ENCODE measurements at regions of chr9 and their contacts with region 1.

Region 1: GRCh38 chr9:37415011-37415719 is 7.3 kb upstream of the GRHPR start:
- DNase-seq: peak; percentile 77 to 92
- H3K4me3 ChIP-seq: peak overlapping the region in 1 of 4 experiments; percentile 28; a peak in 1 of 8 replicates
- H3K27ac ChIP-seq: peak overlapping the region; percentile 41
- H3K4me1 ChIP-seq: peaks cover 0 to 18% (median 14%) of the 10 kb centered on the region in 4 experiments; a peak in 6 of 7 replicates
- H3K27me3 ChIP-seq: no peaks in the 10 kb centered on the region
- CTCF ChIP-seq: peak; percentile 61 to 78 (median 73)
- EP300 ChIP-seq: no peak
- POLR2A ChIP-seq: 0 out of 3 replicates have a peak, but pooled peaks of 1 of the 2 experiments have one; percentile 39
- RAD21 ChIP-seq: peak; percentile 46 to 58

Region 2: GRCh38 chr9:37371565-37372464 is 43.4 kb before region 1 on chr9:
- CTCF ChIA-PET with region 1: interaction called, 10 read pairs
- POLR2A ChIA-PET with region 1: interaction called, 3 read pairs
- DNase-seq: no peak
- H3K4me3 ChIP-seq: no peak overlapping the region
- H3K27ac ChIP-seq: no peak overlapping the region
- H3K4me1 ChIP-seq: 0 out of 7 replicates have a peak, but pooled peaks cover 0 to 2% (median 0%) of the 10 kb centered on the region in 4 experiments
- H3K27me3 ChIP-seq: no peaks in the 10 kb centered on the region
- CTCF ChIP-seq: no peak
- EP300 ChIP-seq: no peak
- POLR2A ChIP-seq: no peak
- RAD21 ChIP-seq: no peak

Region 3: GRCh38 chr9:37390759-37391158 is 24.4 kb before region 1 on chr9:
- CTCF ChIA-PET with region 1: interaction called, 28 read pairs
- POLR2A ChIA-PET with region 1: interaction called, 3 read pairs
- DNase-seq: peak; percentile 31 to 70
- H3K4me3 ChIP-seq: no peak overlapping the region
- H3K27ac ChIP-seq: no peak overlapping the region
- H3K4me1 ChIP-seq: no peaks in the 10 kb centered on the region; a peak in 1 of 7 replicates
- H3K27me3 ChIP-seq: no peaks in the 10 kb centered on the region
- CTCF ChIP-seq: peak; percentile 76 to 88 (median 79)
- EP300 ChIP-seq: no peak
- POLR2A ChIP-seq: no peak
- RAD21 ChIP-seq: peak; percentile 66 to 73

Region 4: GRCh38 chr9:37398464-37399025 is 16.6 kb before region 1 on chr9:
- CTCF ChIA-PET with region 1: interaction called, 28 read pairs
- POLR2A ChIA-PET with region 1: interaction called, 5 read pairs
- DNase-seq: no peak
- H3K4me3 ChIP-seq: no peak overlapping the region
- H3K27ac ChIP-seq: no peak overlapping the region
- H3K4me1 ChIP-seq: no peaks in the 10 kb centered on the region; a peak in 1 of 7 replicates
- H3K27me3 ChIP-seq: no peaks in the 10 kb centered on the region
- CTCF ChIP-seq: no peak
- EP300 ChIP-seq: no peak
- POLR2A ChIP-seq: no peak
- RAD21 ChIP-seq: no peak

Region 5: GRCh38 chr9:37430841-37431597 is 15.9 kb after region 1 on chr9:
- CTCF ChIA-PET with region 1: interaction called, 24 read pairs
- POLR2A ChIA-PET with region 1: interaction called, 7 read pairs
- DNase-seq: no peak
- H3K4me3 ChIP-seq: no peak overlapping the region
- H3K27ac ChIP-seq: no peak overlapping the region
- H3K4me1 ChIP-seq: peaks cover 3 to 16% (median 9%) of the 10 kb centered on the region in 4 experiments
- H3K27me3 ChIP-seq: no peaks in the 10 kb centered on the region
- CTCF ChIP-seq: peak in 2 of 3 experiments; percentile 12 to 31; a peak in 2 of 4 replicates
- EP300 ChIP-seq: no peak
- POLR2A ChIP-seq: no peak
- RAD21 ChIP-seq: peak in 1 of 2 experiments; percentile 19; a peak in 1 of 4 replicates

Region 6: GRCh38 chr9:37465249-37466036 is 50.3 kb after region 1 on chr9 and contains the start of gene ZBTB5:
- CTCF ChIA-PET with region 1: interaction called, 18 read pairs
- POLR2A ChIA-PET with region 1: interaction called, 11 read pairs
- DNase-seq: peak; percentile 96 to 98
- H3K4me3 ChIP-seq: peak within 1 kb of the TSS; percentile 69 to 94 (median 87)
- H3K27ac ChIP-seq: peak within 1 kb of the TSS; percentile 98
- H3K4me1 ChIP-seq: peaks cover 0 to 9% (median 4%) of the 10 kb centered on the region in 4 experiments; a peak in 2 of 7 replicates
- H3K27me3 ChIP-seq: no peaks in the 10 kb centered on the region
- CTCF ChIP-seq: no peak
- EP300 ChIP-seq: no peak
- POLR2A ChIP-seq: peak; percentile 52 to 62; a peak in 2 of 3 replicates
- RAD21 ChIP-seq: no peak
- total RNA-seq, gene ZBTB5: 13.6 and 14.5 TPM in 2 replicates

Region 7: GRCh38 chr9:37617832-37618231 is 202.7 kb after region 1 on chr9:
- CTCF ChIA-PET with region 1: no interaction called
- POLR2A ChIA-PET with region 1: no interaction called
- DNase-seq: no peak
- H3K4me3 ChIP-seq: no peak overlapping the region
- H3K27ac ChIP-seq: no peak overlapping the region
- H3K4me1 ChIP-seq: no peaks in the 10 kb centered on the region
- H3K27me3 ChIP-seq: no peaks in the 10 kb centered on the region
- CTCF ChIP-seq: no peak
- EP300 ChIP-seq: no peak
- POLR2A ChIP-seq: no peak
- RAD21 ChIP-seq: no peak

Measured in H1 (cell line).